ENCODE measurements at regions of chr3 and their contacts with region 1.

Region 1: GRCh38 chr3:99753268-99753975 is 64.2 kb upstream of the CMSS1 start:
- DNase-seq: no peak
- ATAC-seq: peak in 6 of 8 donors; percentile 55 to 83 (median 79)
- H3K4me3 ChIP-seq: no peak overlapping the region
- H3K27ac ChIP-seq: no peak overlapping the region
- H3K4me1 ChIP-seq: peaks cover 0 to 19% (median 4%) of the 10 kb centered on the region in 9 donors
- H3K27me3 ChIP-seq: no peaks in the 10 kb centered on the region
- CTCF ChIP-seq: peak; percentile 49 to 85 (median 71)

Region 2: GRCh38 chr3:98824256-98824655 is 929.2 kb before region 1 on chr3:
- intact Hi-C with region 1: loop called in 3 of 10 experiments (anchors 5 to 10 kb)
- DNase-seq: no peak
- ATAC-seq: peak in 1 of 8 donors; percentile 45
- H3K4me3 ChIP-seq: no peak overlapping the region
- H3K27ac ChIP-seq: no peak overlapping the region
- H3K4me1 ChIP-seq: peaks cover 0 to 25% (median 0%) of the 10 kb centered on the region in 9 donors
- H3K27me3 ChIP-seq: no peaks in the 10 kb centered on the region
- CTCF ChIP-seq: peak in 2 of 9 donors; percentile 8 to 10

Region 3: GRCh38 chr3:99016452-99016851 is 737.0 kb before region 1 on chr3:
- intact Hi-C with region 1: loop called in 6 of 10 experiments (anchors 5 to 10 kb)
- DNase-seq: no peak
- ATAC-seq: no peak
- H3K4me3 ChIP-seq: no peak overlapping the region
- H3K27ac ChIP-seq: no peak overlapping the region
- H3K4me1 ChIP-seq: no peaks in the 10 kb centered on the region
- H3K27me3 ChIP-seq: no peaks in the 10 kb centered on the region
- CTCF ChIP-seq: no peak

Region 4: DNA sequence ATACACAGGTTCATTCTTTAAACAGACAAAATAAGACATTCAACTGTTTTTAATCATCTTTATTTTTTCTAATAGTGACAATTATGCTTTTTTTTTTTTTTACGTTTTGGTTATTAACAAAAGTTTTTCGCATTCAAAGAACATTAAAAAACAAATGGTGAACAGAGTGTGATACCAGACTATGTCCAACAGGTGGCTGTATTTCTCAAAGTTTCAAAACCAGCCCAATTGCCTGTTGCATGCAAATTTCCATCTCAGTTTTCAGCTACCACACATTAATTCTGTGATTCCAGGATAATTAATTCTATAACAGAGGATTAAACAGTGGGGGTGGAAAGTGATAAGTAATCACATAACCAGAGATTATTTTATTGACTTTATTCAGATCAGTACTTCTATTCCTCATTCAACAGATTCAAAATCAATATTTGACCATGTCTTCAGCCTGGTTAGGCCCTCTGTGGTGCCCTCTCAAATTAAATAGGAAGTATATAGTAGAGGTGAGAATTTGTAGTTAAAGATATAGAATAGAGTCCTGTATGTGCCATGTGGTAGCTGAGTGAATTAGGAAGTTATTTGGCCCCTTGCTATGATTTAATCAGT is 729.7 kb before region 1 on chr3:
- intact Hi-C with region 1: loop called in 9 of 10 experiments (anchors 2 to 10 kb)
- DNase-seq: no peak
- ATAC-seq: no peak
- H3K4me3 ChIP-seq: no peak overlapping the region
- H3K27ac ChIP-seq: no peak overlapping the region
- H3K4me1 ChIP-seq: no peaks in the 10 kb centered on the region
- H3K27me3 ChIP-seq: no peaks in the 10 kb centered on the region
- CTCF ChIP-seq: peak; percentile 29 to 77 (median 66)

Region 5: GRCh38 chr3:99218468-99218867 is 535.0 kb before region 1 on chr3:
- intact Hi-C with region 1: loop called in 1 of 10 experiments (anchors 10 kb)
- DNase-seq: no peak
- ATAC-seq: no peak
- H3K4me3 ChIP-seq: no peak overlapping the region
- H3K27ac ChIP-seq: no peak overlapping the region
- H3K4me1 ChIP-seq: no peaks in the 10 kb centered on the region
- H3K27me3 ChIP-seq: no peaks in the 10 kb centered on the region
- CTCF ChIP-seq: no peak

Region 6: GRCh38 chr3:99638167-99638948 is 115.1 kb before region 1 on chr3 and contains the start of gene COL8A1:
- intact Hi-C with region 1: loop called in 3 of 10 experiments (anchors 5 to 10 kb)
- DNase-seq: peak; percentile 62 to 64
- ATAC-seq: peak; percentile 71 to 91 (median 86)
- H3K4me3 ChIP-seq: peak within 1 kb of the TSS; percentile 37 to 68 (median 58)
- H3K27ac ChIP-seq: peak within 1 kb of the TSS; percentile 59 to 91 (median 84)
- H3K4me1 ChIP-seq: peaks cover 0 to 30% (median 15%) of the 10 kb centered on the region in 9 donors
- H3K27me3 ChIP-seq: peaks cover 0 to 60% (median 27%) of the 10 kb centered on the region in 7 donors
- CTCF ChIP-seq: no peak
- total RNA-seq, gene COL8A1: 7.5 to 32.2 (median 15.1) TPM

Region 7: DNA sequence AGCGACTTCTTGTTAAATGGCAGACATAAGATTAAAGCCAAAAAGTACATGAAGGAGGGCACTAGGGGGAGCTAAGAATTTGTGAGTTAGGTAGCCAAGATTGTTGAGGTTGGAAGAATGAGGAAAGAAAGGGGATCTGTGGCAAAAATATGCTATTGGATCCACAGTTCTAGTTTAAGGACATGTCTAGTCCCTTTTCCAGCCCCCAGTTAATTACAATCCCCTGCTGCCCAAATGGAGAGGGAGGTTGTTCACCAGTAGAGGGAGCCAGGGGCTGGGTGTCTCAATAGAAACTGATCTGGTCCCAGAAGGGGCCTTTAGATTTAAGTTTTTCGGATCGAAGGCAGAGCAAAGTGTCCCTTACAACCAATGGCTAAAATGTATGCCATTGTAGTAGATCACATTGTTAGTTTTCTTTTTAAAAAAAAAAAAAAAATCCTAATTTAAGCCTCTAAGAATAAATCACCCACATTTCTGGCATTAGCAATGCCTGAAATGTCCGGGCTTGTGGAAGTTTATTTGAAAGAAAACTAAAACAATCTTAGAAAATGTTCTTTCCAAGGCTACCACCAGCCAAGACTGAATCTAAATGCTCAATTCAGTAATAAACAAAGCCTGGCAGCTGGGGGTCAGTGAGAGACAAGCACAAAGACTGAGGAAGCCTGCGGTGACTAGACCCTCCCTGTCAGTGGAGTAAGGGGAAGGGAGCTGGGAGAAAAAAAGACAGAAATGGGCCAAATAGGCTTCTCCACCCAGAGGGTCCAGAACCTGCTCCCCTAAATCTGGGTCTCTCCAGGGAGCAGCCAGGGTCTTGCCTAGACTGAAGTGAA is 107.9 kb before region 1 on chr3:
- intact Hi-C with region 1: loop called in 3 of 10 experiments (anchors 5 to 10 kb)
- DNase-seq: no peak
- ATAC-seq: peak in 5 of 8 donors; percentile 4 to 31 (median 23)
- H3K4me3 ChIP-seq: no peak overlapping the region
- H3K27ac ChIP-seq: peak overlapping the region in 9 of 10 donors; percentile 3 to 72 (median 45)
- H3K4me1 ChIP-seq: peaks cover 0 to 29% (median 7%) of the 10 kb centered on the region in 9 donors
- H3K27me3 ChIP-seq: no peaks in the 10 kb centered on the region
- CTCF ChIP-seq: peak in 8 of 9 donors; percentile 38 to 68 (median 58)

Region 8: DNA sequence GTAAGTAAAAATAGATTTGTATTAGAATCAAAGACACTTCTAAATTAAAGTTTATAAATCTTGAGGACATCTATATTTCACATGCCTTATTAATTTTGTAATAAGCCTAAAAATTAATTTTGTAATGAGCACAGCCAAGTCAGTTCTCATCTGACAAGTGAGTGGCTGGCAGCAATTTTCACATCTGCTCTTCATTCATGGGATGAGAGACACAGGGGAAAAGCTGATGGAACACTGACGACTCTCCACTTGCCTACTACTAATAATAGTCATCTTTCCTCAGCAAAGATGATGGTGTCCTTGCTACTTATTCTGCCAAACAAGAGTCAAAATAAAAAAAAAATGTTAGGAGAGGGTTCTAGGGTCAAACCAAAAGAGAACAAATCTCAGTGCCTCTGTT is 49.9 kb after region 1 on chr3:
- intact Hi-C with region 1: no loop called
- DNase-seq: no peak
- ATAC-seq: no peak
- H3K4me3 ChIP-seq: no peak overlapping the region
- H3K27ac ChIP-seq: no peak overlapping the region
- H3K4me1 ChIP-seq: peaks cover 0 to 4% (median 0%) of the 10 kb centered on the region in 9 donors
- H3K27me3 ChIP-seq: no peaks in the 10 kb centered on the region
- CTCF ChIP-seq: no peak

Region 9: GRCh38 chr3:100776746-100777145 is 1023.3 kb after region 1 on chr3:
- intact Hi-C with region 1: no loop called
- DNase-seq: no peak
- ATAC-seq: no peak
- H3K4me3 ChIP-seq: no peak overlapping the region
- H3K27ac ChIP-seq: no peak overlapping the region
- H3K4me1 ChIP-seq: no peaks in the 10 kb centered on the region
- H3K27me3 ChIP-seq: no peaks in the 10 kb centered on the region
- CTCF ChIP-seq: no peak